Activated naive CD4-positive, alpha-beta T cell treated with anti-CD3 and anti-CD28 coated beads for 36 hours (primary cell): ENCODE measurements at regions of chr18 and their contacts with region 1.

Region 1: DNA sequence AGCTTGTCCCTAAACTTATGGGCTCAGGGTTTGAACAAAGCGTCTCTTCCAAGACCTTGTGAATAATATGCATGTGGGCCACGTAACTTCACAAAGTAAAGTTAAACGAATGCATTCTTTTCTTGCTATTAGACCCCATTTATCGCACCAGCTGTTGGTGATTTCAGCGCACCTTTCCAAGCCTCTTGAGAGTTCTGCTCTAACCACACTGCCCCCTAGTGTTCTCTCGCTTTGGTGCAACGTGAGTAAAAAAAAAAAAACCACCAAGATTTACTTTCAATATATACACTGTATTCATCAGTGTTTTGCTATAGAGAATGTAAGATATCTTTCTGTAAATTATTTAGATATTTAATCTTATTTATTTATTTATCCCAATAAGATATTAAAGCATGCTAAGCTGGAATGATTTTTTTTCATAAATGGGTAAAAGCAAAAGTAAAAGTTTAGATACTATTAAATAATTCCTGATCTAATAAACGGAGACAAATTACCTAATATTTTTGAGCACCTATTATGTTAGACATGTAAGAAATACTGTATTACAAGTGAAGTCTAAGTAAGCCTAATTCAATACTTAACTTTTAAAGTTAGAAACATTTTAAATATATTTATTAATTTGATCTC is 459.5 kb downstream of the DLGAP1 start:
- DNase-seq: peak; percentile 78
- H3K4me3 Mint-ChIP-seq: no peak overlapping the region
- H3K27ac Mint-ChIP-seq: no peak overlapping the region
- H3K4me1 Mint-ChIP-seq: no peaks in the 10 kb centered on the region
- H3K27me3 Mint-ChIP-seq: peaks cover 5% of the 10 kb centered on the region

Region 2: GRCh38 chr18:3703732-3704176 is 291.8 kb before region 1 on chr18:
- CTCF ChIA-PET with region 1: interaction called, 3 read pairs
- intact Hi-C with region 1: loop called (anchors 1 kb)
- DNase-seq: peak; percentile 57
- H3K4me3 Mint-ChIP-seq: no peak overlapping the region
- H3K27ac Mint-ChIP-seq: no peak overlapping the region
- H3K4me1 Mint-ChIP-seq: peaks cover 3% of the 10 kb centered on the region
- H3K27me3 Mint-ChIP-seq: peaks cover 32% of the 10 kb centered on the region

Region 3: DNA sequence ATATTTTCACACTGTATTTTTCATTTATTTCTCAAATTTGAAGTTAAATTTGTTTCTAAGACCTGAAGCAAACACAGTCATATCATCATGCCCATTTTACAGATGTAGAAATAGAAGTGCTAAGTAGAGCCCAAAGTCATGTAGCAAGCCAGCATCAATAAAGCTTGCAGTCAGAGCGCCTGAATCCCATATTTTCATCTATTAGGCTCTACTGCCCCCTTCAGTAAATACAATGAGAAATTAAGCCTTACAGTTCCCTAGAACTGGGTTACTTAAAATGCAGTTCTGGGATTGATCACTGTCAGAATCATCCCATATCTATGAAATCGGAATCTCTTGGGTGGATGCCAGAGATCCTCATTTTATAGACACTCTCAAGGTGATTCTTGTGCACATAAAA is 125.7 kb before region 1 on chr18:
- CTCF ChIA-PET with region 1: interaction called, 3 read pairs
- intact Hi-C with region 1: loop called (anchors 5 kb)
- DNase-seq: no peak
- H3K4me3 Mint-ChIP-seq: no peak overlapping the region
- H3K27ac Mint-ChIP-seq: no peak overlapping the region
- H3K4me1 Mint-ChIP-seq: no peaks in the 10 kb centered on the region
- H3K27me3 Mint-ChIP-seq: peaks cover 16% of the 10 kb centered on the region

Region 4: DNA sequence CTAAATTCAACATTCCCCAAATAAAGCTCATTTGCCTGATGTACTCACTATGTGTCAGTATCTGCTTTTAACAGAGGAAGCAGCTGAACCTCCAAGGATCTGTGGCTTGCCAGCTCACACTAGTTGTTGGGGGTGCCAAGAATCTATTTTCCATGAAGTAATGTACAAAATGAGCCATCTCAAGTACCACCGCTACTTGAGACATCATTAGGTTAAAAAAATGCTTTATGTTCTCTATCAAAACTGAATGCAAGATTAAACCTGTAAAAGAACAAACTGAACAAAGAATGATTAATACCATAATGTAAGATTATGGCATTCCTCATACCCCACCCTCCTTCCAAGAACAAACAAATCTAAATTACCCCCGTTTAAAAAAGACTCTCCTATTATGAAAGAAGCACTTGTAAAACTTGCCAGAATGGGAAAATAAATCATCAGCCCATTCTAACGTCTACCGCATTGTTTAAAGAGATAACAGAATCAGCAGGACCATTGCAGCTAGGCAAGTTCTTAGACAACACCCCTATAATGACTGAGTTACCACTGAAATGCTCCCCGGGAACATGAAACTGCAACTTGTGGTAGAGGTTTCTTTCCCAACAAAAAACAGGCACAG is 12.1 kb before region 1 on chr18:
- CTCF ChIA-PET with region 1: interaction called, 31 read pairs
- intact Hi-C with region 1: no loop called
- DNase-seq: no peak
- H3K4me3 Mint-ChIP-seq: no peak overlapping the region
- H3K27ac Mint-ChIP-seq: no peak overlapping the region
- H3K4me1 Mint-ChIP-seq: peaks cover 17% of the 10 kb centered on the region
- H3K27me3 Mint-ChIP-seq: no peaks in the 10 kb centered on the region

Region 5: DNA sequence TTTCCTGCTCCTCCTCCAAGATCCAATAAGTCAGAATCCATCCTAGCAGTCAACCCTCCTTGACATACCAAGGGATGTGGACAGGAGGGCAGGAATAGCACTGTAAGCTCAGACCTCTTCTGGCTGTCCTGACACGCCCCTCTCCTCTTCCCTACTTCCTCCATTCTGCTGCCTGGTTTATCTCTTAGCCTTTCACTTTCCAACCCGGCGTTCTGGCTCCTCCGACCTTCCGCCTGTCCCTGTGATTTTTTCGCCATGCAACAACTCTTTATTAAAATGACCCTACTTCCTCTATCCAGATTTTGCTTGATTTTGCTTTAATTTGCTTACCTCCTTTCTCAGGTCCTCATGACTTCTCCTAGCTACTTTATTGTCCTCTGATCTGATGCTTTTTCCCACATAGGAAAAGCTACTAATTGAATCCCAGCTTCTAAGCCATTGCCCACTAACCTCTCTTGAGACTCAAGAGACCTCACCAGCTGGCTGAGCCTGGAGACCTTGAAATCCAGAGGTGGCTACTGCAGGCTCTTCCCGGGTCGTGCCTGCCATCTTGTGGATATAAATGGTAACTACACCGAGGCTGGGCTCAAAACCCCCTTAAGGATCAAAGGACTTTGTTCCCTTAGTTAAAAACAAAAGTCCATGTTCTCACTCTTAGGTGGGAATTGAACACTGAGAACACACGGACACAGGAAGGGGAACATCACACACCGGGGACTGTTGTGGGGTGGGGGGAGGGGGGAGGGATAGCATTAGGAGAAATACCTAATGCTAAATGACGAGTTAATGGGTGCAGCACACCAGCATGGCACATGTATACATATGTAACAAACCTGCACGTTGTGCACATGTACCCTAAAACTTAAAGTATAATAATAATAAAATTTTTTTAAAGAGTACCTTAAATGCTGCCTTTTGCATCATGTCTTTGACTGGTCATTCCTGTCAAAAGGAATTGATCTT is 1062.1 kb after region 1 on chr18:
- CTCF ChIA-PET with region 1: no interaction called
- intact Hi-C with region 1: loop called (anchors 2 kb)
- DNase-seq: peak; percentile 71
- H3K4me3 Mint-ChIP-seq: no peak overlapping the region
- H3K27ac Mint-ChIP-seq: no peak overlapping the region
- H3K4me1 Mint-ChIP-seq: peaks cover 20% of the 10 kb centered on the region
- H3K27me3 Mint-ChIP-seq: peaks cover 5% of the 10 kb centered on the region